CD14-positive monocyte (primary cell): ENCODE measurements at regions of chr13 and their contacts with region 1.

Region 1: DNA sequence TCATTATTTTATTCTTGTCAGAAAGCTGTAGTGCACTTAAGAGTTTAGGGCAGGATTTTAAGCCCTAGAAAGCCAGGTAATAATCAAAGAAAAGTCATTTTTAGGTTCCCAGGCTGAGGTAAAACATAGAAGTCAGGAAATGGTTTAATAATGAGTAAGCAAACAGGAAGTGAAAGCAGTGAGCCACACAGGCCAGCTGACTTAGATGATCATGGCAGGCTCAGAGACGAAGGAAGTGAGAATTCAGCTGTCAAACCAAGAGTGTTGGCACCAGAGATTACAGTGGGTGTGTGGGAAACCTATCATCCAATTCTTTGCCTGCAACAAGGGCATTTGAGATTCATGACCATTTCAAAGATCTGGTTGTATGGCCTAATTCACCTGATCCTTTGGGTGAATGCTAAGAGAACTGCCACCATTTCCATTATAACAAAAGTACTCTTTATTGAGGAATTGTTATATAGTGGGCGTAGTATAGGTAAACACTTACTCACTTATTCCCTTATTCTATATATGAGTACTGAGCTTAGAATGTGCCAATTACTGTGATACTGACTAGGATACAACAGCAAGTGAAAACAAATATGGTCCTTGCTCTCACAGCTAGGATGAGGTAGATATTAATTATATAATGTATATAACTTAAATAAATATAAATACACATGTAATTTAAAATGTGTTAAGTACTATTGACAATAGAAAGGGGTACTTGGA is 103.7 kb upstream of the EDNRB start:
- DNase-seq: peak; percentile 78 to 92 (median 90)
- H3K4me3 ChIP-seq: no peak overlapping the region
- H3K4me3 Mint-ChIP-seq: no peak overlapping the region
- H3K27ac ChIP-seq: peak overlapping the region in 1 of 2 donors; percentile 57
- H3K27ac Mint-ChIP-seq: peak overlapping the region in 6 of 7 donors; percentile 33 to 74 (median 54)
- H3K4me1 ChIP-seq: peaks cover 9 to 10% of the 10 kb centered on the region in 2 donors
- H3K4me1 Mint-ChIP-seq: peaks cover 12% of the 10 kb centered on the region
- H3K27me3 ChIP-seq: no peaks in the 10 kb centered on the region
- H3K27me3 Mint-ChIP-seq: peaks cover 0 to 1% (median 0%) of the 10 kb centered on the region in 3 donors
- CTCF ChIP-seq: no peak

Region 2: GRCh38 chr13:77874406-77874805 is 147.9 kb before region 1 on chr13:
- intact Hi-C with region 1: loop called in 1 of 2 experiments (anchors 5 kb)
- DNase-seq: no peak
- H3K4me3 ChIP-seq: no peak overlapping the region
- H3K4me3 Mint-ChIP-seq: no peak overlapping the region
- H3K27ac ChIP-seq: no peak overlapping the region
- H3K27ac Mint-ChIP-seq: no peak overlapping the region
- H3K4me1 ChIP-seq: no peaks in the 10 kb centered on the region
- H3K4me1 Mint-ChIP-seq: peaks cover 3% of the 10 kb centered on the region
- H3K27me3 ChIP-seq: no peaks in the 10 kb centered on the region
- H3K27me3 Mint-ChIP-seq: no peaks in the 10 kb centered on the region
- CTCF ChIP-seq: no peak

Region 3: GRCh38 chr13:78102121-78102677 is 79.9 kb after region 1 on chr13:
- intact Hi-C with region 1: loop called in 1 of 2 experiments (anchors 10 kb)
- DNase-seq: peak; percentile 34 to 51 (median 46)
- H3K4me3 ChIP-seq: peak overlapping the region in 1 of 3 experiments; percentile 45
- H3K4me3 Mint-ChIP-seq: peak overlapping the region; percentile 30 to 53
- H3K27ac ChIP-seq: peak overlapping the region in 1 of 2 donors; percentile 61
- H3K27ac Mint-ChIP-seq: peak overlapping the region in 6 of 7 donors; percentile 22 to 79 (median 62)
- H3K4me1 ChIP-seq: peaks cover 13 to 20% of the 10 kb centered on the region in 2 donors
- H3K4me1 Mint-ChIP-seq: peaks cover 20% of the 10 kb centered on the region
- H3K27me3 ChIP-seq: no peaks in the 10 kb centered on the region
- H3K27me3 Mint-ChIP-seq: peaks cover 0 to 5% (median 0%) of the 10 kb centered on the region in 3 donors
- CTCF ChIP-seq: no peak

Region 4: DNA sequence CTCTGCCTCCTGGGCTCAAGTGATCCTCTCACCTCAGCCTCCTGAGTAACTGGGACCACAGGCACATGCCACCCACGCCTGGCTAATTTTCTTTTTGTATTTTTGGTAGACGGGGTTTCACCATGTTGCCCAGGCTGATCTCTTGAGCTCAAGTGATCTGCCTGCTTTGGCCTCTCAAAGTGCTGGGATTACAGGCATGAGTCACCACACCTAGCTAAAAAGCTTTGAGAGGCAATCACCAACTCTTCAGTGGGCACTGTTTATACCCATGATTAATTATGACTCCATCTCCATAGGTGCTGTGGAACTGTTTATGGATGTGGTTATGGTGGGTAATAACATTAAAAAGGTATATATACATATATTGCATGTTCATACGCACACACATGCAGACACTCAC is 1391.2 kb after region 1 on chr13:
- intact Hi-C with region 1: loop called in 1 of 2 experiments (anchors 10 kb)
- DNase-seq: no peak
- H3K4me3 ChIP-seq: no peak overlapping the region
- H3K4me3 Mint-ChIP-seq: no peak overlapping the region
- H3K27ac ChIP-seq: no peak overlapping the region
- H3K27ac Mint-ChIP-seq: no peak overlapping the region
- H3K4me1 ChIP-seq: no peaks in the 10 kb centered on the region
- H3K4me1 Mint-ChIP-seq: no peaks in the 10 kb centered on the region
- H3K27me3 ChIP-seq: no peaks in the 10 kb centered on the region
- H3K27me3 Mint-ChIP-seq: peaks cover 0 to 2% (median 0%) of the 10 kb centered on the region in 3 donors
- CTCF ChIP-seq: no peak